ENCODE measurements at regions of chr6 and their contacts with region 1.

Region 1: DNA sequence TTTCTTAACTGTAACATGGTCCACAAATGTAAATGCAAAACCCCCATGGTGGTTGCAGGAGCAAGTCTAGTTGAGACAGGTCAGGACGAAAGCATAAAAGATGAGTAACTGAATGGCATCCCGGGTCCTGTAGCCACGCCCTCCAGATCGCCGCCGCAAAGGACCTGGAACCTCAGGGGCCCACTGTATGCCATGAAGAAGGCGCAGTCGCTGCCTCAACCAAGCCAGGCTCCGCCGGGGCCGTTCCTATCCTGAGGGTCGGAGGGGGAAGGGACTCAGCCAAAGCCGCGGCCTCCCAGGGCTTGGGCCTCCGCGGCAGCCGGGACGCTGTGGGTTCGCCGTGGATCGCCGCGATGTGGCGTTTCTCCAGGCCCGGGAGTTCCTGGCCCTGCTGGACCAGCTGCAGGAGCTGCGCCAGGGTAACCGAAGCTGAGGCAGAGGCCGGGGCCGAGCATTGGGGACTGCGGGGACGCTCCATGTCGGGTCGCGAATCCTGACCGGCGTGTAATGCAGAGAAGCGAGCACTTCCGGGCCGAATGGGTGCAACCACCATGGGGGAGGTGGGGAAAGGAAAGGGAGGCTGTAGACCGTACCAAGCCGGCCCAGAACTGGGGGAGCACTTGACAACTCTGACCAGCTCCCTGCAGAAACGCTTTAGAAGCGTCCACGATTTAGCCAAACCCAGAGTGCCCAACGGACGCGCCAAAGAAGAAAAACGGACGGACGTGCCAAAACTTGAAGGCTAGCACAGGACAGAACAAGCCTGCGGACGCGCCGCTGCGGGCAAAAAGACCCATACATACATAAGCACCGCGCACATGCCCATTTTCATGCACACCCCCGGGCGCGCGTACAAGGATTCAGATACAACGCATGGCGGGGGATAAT is 11.1 kb downstream of the RPL7L1 start:
- DNase-seq: peak; percentile 91
- H3K4me3 ChIP-seq: peak overlapping the region; percentile 76 to 94 (median 84)
- H3K27ac ChIP-seq: peak overlapping the region; percentile 94
- H3K4me1 ChIP-seq: peaks cover 0 to 5% (median 4%) of the 10 kb centered on the region in 4 experiments; a peak in 5 of 7 replicates
- H3K27me3 ChIP-seq: no peaks in the 10 kb centered on the region
- CTCF ChIP-seq: no peak
- EP300 ChIP-seq: peak in 1 of 2 experiments; percentile 99; a peak in 2 of 3 replicates
- POLR2A ChIP-seq: peak; percentile 89 to 98
- RAD21 ChIP-seq: no peak

Region 2: DNA sequence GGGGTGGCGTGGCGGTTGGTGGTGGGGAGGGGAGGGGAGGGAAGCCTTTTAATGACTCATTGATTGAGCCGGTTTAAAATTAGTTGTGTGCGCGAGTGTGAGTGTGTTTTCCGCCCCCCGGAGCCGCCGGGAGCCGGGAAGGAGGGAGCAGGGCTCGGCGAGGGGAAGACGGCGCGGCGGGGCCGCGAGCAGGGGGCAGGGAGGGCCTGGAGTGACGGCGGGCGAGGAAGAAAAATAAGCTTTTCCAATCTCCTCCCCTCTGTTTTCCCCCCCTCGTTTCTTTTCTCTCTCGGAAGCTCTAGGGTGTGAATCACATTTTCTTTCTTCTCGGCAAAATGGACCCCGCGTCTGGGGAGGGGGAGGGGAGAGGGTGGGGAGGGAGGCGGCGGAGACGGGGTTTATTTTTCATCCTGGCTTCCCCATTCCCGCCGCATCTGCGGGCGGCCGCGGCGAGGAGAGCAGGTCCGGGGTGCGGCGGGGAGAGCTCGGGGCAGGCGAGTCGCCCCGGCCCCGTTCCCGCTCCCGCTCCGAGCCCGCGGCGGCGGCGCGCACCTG is 107.9 kb before region 1 on chr6:
- CTCF ChIA-PET with region 1: no interaction called
- POLR2A ChIA-PET with region 1: interaction called, 15 read pairs
- DNase-seq: peak in 1 of 2 experiments; percentile 78
- H3K4me3 ChIP-seq: peak overlapping the region; percentile 82 to 96 (median 88)
- H3K27ac ChIP-seq: peak overlapping the region; percentile 98
- H3K4me1 ChIP-seq: peaks cover 0 to 9% (median 0%) of the 10 kb centered on the region in 4 experiments; a peak in 3 of 7 replicates
- H3K27me3 ChIP-seq: no peaks in the 10 kb centered on the region
- CTCF ChIP-seq: no peak
- EP300 ChIP-seq: no peak; a peak in 1 of 3 replicates
- POLR2A ChIP-seq: peak; percentile 80 to 83; a peak in 2 of 3 replicates
- RAD21 ChIP-seq: no peak

Region 3: DNA sequence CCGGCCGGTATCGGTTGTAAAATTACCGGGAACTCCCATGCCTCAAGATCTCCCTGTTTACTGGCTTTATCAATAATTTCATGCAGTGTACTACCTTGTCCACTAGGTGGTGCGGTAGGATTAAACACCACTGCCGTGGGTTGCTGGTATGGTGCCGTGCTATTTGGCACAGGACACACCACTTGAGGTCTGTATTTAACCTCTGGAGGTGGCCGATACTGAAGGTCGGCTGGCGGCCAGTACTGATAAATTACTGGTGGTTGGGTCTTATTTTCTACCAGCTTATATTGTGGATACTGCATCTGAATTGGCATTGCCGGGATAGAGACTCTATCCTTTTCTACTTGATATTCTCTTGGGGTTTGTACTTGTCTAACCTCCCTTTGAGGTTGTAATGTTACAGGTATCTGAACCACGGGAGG is 11.0 kb after region 1 on chr6:
- CTCF ChIA-PET with region 1: interaction called, 8 read pairs
- POLR2A ChIA-PET with region 1: interaction called, 14 read pairs
- DNase-seq: peak in 1 of 2 experiments; percentile 75
- H3K4me3 ChIP-seq: no peak overlapping the region
- H3K27ac ChIP-seq: no peak overlapping the region
- H3K4me1 ChIP-seq: peaks cover 2 to 8% (median 7%) of the 10 kb centered on the region in 4 experiments; a peak in 5 of 7 replicates
- H3K27me3 ChIP-seq: no peaks in the 10 kb centered on the region
- CTCF ChIP-seq: peak; percentile 52 to 88 (median 86)
- EP300 ChIP-seq: no peak
- POLR2A ChIP-seq: no peak
- RAD21 ChIP-seq: peak; percentile 96